HEK293 (cell line): ENCODE measurements at regions of chr11 and their contacts with region 1.

Region 1: DNA sequence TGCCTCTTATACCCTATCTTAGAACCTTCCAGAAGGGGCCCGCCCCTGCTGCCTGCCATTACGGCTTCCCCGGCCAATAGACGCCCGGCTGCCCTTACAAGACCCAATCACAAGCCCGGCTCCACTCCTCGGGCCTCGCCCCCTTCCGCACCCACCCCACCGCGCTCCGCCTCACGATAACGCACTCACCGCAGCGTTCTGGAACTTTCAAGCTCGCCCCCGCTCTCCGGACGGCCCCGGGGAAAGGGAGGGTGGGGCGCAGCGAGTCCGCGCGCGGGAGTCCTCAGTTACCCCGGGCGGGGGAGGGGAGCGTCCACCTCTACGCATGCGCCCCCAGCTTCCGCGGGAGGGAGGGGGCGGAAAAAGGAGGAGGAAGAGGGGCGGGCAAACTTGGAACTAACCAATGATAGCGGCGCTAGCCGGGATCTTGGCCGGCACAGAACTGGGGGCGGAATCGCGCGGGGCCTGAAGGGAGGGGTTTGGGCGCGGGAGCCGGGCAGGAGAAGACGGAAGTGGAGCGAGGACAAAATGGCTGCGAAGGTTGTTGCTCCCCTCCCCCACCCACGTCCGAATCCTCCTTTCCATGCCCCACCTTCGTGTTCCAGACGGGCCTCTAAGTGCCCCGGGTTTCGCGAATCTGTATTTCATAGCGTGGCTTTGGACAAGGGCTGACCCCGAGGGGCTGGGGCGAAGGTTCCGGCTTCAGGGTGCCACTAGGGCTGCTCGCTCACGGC is 389 bp upstream of the HSPA8 start:
- H3K4me3 ChIP-seq: peak overlapping the region; percentile 88
- H3K27ac ChIP-seq: peak overlapping the region; percentile 92
- H3K4me1 ChIP-seq: no peaks in the 10 kb centered on the region
- CTCF ChIP-seq: 0 out of 2 replicates have a peak, but pooled peaks have one; percentile 35

Region 2: DNA sequence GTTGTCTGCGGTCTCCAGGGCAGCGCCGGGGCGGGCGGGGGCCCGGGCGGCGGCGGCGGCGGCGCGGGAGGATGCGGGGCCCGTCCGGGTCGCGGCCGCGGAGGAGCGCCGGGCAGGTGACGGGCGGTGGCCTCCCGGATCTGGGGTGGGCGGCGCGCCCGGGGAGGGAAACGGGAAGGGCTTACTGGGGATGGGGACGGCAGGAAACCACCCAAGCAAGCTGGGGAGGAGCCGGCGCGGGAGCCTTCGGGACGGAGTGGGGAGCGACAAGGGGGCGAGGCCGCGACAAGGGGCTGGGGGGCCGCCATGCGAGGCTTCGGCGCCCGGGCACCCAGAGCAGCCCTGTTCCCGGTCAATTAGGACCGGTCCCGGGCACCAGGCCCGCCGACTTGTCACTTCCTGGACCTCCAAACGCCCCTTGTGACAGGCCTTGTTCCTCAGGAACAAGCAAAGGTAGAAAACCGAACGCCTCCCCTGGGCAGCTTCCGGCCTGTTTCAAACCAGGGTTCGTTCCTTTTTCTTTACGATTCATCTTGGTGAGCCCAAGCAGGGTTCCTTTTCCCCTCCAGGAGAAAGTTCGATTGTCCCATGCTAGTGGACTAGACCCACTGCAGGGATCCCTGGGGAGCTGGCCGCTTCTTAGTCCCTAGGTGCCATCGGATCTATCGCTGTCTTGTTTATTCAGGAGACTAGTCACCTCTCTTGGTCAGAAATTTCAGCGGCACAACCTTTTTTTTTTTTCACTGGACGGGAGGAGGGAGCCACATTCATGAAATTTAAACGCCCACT is 179.3 kb before region 1 on chr11:
- CTCF ChIA-PET with region 1: no interaction called
- POLR2A ChIA-PET with region 1: interaction called, 18 read pairs
- H3K4me3 ChIP-seq: peak overlapping the region; percentile 70
- H3K27ac ChIP-seq: peak overlapping the region; percentile 93
- H3K4me1 ChIP-seq: no peaks in the 10 kb centered on the region
- CTCF ChIP-seq: 0 out of 2 replicates have a peak, but pooled peaks have one; percentile 10

Region 3: GRCh38 chr11:122976734-122977469 is 85.4 kb before region 1 on chr11:
- CTCF ChIA-PET with region 1: no interaction called
- POLR2A ChIA-PET with region 1: no interaction called
- H3K4me3 ChIP-seq: peak overlapping the region; percentile 13
- H3K27ac ChIP-seq: no peak overlapping the region
- H3K4me1 ChIP-seq: 0 out of 2 replicates have a peak, but pooled peaks cover 2% of the 10 kb centered on the region
- CTCF ChIP-seq: no peak

Region 4: DNA sequence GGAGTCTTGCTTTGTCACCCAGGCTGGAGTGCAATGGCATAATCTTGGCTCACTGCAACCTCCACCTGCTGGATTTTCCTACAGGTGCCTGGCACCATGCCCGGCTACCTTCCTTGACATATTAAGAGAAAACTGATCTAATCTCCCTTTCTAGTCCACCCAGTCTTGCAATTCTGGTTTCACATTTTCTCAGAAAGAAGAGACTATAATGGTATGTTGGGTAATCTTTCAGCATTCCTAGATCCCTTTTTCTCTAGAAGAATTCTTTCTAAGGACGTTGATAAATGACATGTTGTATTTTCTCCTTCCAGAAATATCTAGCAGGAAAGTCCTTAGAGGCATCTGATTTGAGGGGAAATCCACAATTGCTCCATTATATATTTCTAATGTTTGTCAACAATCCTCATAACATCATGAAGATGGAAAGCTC is 10.0 kb after region 1 on chr11:
- CTCF ChIA-PET with region 1: interaction called, 3 read pairs
- POLR2A ChIA-PET with region 1: interaction called, 13 read pairs
- H3K4me3 ChIP-seq: no peak overlapping the region
- H3K27ac ChIP-seq: no peak overlapping the region
- H3K4me1 ChIP-seq: no peaks in the 10 kb centered on the region
- CTCF ChIP-seq: no peak

Region 5: GRCh38 chr11:123091506-123091905 is 29.2 kb after region 1 on chr11:
- CTCF ChIA-PET with region 1: no interaction called
- POLR2A ChIA-PET with region 1: interaction called, 12 read pairs
- H3K4me3 ChIP-seq: no peak overlapping the region
- H3K27ac ChIP-seq: no peak overlapping the region
- H3K4me1 ChIP-seq: no peaks in the 10 kb centered on the region
- CTCF ChIP-seq: no peak

Region 6: DNA sequence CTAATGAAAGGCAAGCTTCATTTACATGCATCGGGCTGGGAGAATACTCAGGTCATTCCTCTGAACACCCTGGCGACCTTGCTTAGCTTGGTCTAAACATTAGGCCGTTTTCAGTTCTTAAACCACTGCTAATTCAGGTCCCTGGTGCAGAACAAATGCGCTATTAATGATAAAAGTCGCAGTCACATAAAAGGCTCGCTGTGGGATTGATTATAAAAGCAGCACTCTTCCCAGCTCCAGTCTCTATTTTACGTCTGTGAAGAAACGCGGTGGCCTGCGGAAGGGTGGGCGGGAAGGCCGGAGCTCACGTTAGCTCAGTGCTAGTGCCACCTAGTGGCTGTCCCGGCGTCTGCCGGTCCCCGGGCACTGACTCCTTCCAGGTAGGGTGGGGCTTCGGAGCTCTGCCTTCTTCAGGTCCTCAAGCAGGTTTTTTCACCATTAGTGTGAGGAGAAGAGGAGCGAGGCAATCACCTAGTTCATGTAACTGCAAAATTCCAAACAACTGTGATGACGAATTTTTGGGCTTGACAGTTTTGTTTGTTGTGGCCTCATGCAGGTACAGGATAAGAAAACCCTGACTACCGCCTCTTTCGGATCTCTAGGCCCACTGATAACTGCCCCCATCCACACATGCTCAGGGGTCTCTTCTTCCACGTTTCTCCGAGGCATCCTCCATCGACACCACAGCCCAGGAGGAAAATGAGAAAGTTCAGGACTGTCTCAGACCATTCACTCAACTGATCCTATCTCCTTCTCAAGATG is 199.2 kb after region 1 on chr11:
- CTCF ChIA-PET with region 1: no interaction called
- POLR2A ChIA-PET with region 1: interaction called, 12 read pairs
- H3K4me3 ChIP-seq: no peak overlapping the region
- H3K27ac ChIP-seq: no peak overlapping the region
- H3K4me1 ChIP-seq: peaks cover 6% of the 10 kb centered on the region
- CTCF ChIP-seq: peak; percentile 53; the same call in 1 of the 2 replicates

Region 7: GRCh38 chr11:123547180-123547579 is 484.9 kb after region 1 on chr11:
- CTCF ChIA-PET with region 1: no interaction called
- POLR2A ChIA-PET with region 1: no interaction called
- H3K4me3 ChIP-seq: no peak overlapping the region
- H3K27ac ChIP-seq: no peak overlapping the region
- H3K4me1 ChIP-seq: no peaks in the 10 kb centered on the region
- CTCF ChIP-seq: no peak